HEK293T (cell line): ENCODE measurements at regions of chr10 and their contacts with region 1.

Region 1: DNA sequence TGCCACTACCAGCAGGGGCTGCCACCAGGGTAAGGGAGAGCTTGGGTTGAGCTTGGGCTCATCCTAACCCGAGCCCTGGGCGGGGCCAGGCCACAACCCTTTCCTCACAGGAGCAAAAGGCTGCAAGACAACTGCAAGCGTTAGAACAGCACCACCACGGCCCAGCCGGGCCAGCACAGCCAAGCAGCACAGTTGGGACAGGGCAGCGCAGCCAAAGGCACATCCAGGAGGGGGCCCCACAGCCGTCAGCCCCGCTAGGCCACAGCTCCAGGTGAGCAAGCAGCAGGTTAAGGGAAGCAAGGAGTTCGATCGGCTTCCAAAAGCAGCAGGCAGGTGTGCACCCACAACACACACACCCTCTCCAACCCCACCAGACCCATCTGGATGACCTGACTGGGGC is 7.0 kb upstream of the NDST2 start:
- DNase-seq: no peak

Region 2: DNA sequence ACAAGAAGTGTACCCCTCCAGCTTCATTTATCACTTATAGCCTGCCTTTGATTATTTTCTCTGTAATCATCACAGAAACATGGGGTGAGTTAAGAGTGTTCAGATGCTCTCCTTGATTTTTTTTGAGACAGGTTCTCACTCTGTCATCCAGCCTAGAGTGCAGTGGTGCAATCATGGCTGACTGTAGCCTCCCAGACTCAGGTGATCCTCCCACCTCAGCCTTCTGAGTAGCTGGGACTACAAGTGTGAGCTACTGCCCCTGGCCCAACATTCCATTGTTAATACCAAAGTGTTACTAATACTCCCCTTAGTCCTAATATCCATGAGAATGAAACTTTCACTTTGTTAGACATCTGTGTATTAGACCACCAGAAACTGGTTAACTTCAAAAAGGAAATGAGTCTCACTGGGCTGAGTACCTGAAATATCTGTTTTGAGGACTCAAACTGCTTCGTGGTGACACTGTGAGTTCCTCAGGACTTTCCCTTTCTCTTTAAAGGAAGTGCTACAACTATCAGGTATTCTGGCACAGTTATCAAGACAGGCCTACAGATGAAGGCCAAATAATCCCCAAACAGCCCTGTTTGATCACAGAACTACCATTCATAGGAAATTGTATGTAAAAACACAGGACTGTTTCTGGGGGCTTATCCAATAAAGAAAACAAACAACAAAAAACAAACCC is 439.2 kb before region 1 on chr10:
- CTCF ChIA-PET with region 1: interaction called, 10 read pairs
- POLR2A ChIA-PET with region 1: no interaction called
- DNase-seq: no peak